Naive thymus-derived CD4-positive, alpha-beta T cell (primary cell): ENCODE measurements at regions of chr18 and their contacts with region 1.

Region 1: DNA sequence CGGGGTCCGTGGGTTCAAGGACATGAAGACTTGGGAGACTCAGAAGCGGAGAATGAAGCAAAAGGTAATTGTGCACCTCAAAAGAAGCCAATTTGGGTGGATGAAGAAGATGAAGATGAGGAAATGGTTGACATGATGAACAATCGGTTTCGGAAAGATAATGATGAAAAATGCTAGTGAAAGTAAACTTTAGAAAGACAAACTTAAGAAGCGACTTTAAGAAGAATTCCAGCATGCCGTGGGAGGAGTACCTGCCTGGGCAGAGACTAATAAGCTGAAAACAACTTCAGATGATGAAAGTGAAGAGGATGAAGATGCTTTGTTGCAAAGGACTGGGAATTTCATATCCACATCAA is 43.5 kb downstream of the PSTPIP2 start:
- DNase-seq: no peak
- ATAC-seq: no peak
- H3K4me3 ChIP-seq: peak overlapping the region; percentile 89
- H3K4me3 Mint-ChIP-seq: peak overlapping the region; percentile 80 to 96 (median 92)
- H3K27ac ChIP-seq: peak overlapping the region; percentile 54
- H3K27ac Mint-ChIP-seq: peak overlapping the region in 8 of 9 donors; percentile 25 to 86 (median 76)
- H3K4me1 ChIP-seq: peaks cover 0 to 5% of the 10 kb centered on the region in 2 donors
- H3K4me1 Mint-ChIP-seq: peaks cover 7 to 14% (median 13%) of the 10 kb centered on the region in 7 donors
- H3K27me3 ChIP-seq: no peaks in the 10 kb centered on the region
- H3K27me3 Mint-ChIP-seq: peaks cover 0 to 14% (median 0%) of the 10 kb centered on the region in 5 donors

Region 2: DNA sequence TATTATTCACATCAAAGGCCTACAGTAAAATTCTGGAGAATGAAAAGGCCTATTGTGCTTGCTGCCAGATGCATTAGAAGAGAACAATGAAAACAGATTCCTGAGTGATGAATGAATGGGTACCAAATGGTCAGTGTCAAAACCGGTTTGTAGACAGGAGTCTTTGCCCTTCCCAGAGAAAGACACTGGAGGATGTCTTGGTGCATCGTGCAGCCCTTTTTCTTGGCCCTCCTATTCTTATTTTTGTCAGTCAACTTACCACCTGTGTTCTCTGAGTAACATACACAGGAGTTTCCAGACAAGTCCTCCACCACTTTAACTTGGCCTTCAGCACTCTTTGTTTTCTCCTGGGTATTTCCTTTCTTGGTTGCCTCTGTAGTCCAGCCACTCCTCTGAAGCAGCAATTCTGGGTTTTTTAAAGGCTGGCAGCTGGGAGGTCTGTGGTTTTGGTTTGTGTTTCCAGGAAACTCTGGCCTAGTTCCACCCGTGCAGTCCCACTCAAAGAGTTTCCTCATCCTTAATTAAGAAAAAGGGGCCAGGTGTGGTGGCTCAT is 14.1 kb after region 1 on chr18:
- CTCF ChIA-PET with region 1: no interaction called
- POLR2A ChIA-PET with region 1: interaction called, 5 read pairs
- intact Hi-C with region 1: loop called (anchors 1 kb)
- DNase-seq: no peak
- ATAC-seq: no peak
- H3K4me3 ChIP-seq: no peak overlapping the region
- H3K4me3 Mint-ChIP-seq: peak overlapping the region; percentile 27 to 82 (median 58)
- H3K27ac ChIP-seq: no peak overlapping the region
- H3K27ac Mint-ChIP-seq: peak overlapping the region; percentile 44 to 89 (median 75)
- H3K4me1 ChIP-seq: peaks cover 24 to 40% of the 10 kb centered on the region in 2 donors
- H3K4me1 Mint-ChIP-seq: peaks cover 29 to 62% (median 55%) of the 10 kb centered on the region in 7 donors
- H3K27me3 ChIP-seq: no peaks in the 10 kb centered on the region
- H3K27me3 Mint-ChIP-seq: no peaks in the 10 kb centered on the region

Region 3: GRCh38 chr18:46104128-46104911 is 75.8 kb after region 1 on chr18 and contains the start of gene HAUS1:
- CTCF ChIA-PET with region 1: no interaction called
- POLR2A ChIA-PET with region 1: no interaction called
- intact Hi-C with region 1: loop called in 1 of 2 experiments (anchors 2 kb)
- DNase-seq: peak; percentile 62 to 87 (median 69)
- ATAC-seq: peak; percentile 98
- H3K4me3 ChIP-seq: peak within 1 kb of the TSS; percentile 89
- H3K4me3 Mint-ChIP-seq: peak within 1 kb of the TSS; percentile 93 to 99 (median 98)
- H3K27ac ChIP-seq: peak within 1 kb of the TSS; percentile 80
- H3K27ac Mint-ChIP-seq: peak within 1 kb of the TSS; percentile 73 to 97 (median 91)
- H3K4me1 ChIP-seq: peaks cover 5% of the 10 kb centered on the region in 2 donors
- H3K4me1 Mint-ChIP-seq: peaks cover 11 to 37% (median 26%) of the 10 kb centered on the region in 7 donors
- H3K27me3 ChIP-seq: no peaks in the 10 kb centered on the region
- H3K27me3 Mint-ChIP-seq: no peaks in the 10 kb centered on the region
- total RNA-seq, gene HAUS1: 10.4 to 47.2 (median 15.2) TPM